ENCODE measurements at regions of chr20 and their contacts with region 1.

Region 1: GRCh38 chr20:34907616-34908469 is 31.4 kb downstream of the ACSS2 start:
- DNase-seq: peak in 1 of 2 donors; percentile 79
- H3K4me3 ChIP-seq: no peak overlapping the region
- H3K27ac ChIP-seq: peak overlapping the region; percentile 77 to 82
- H3K4me1 ChIP-seq: peaks cover 6 to 28% of the 10 kb centered on the region in 2 donors
- H3K27me3 ChIP-seq: no peaks in the 10 kb centered on the region
- CTCF ChIP-seq: no peak

Region 2: DNA sequence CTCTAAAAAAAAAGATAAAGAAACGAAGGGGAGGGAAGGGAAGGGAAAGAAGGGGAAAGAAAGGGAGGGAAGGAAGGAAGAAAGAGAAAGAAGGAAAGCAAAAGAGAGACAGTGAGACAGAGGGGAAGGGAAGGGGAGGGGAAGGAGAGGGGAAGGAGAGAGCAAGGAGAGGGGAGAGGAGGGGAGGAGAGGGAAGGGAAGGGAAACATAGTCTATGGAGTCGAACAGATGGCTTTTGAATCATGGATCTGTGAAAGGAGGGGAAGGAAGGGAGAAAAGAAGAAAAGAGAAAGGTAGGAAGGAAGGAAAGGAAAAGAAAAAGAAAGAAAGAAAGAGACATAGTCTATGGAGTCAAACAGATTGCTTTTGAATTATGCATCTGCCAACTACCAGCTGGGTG is 65.7 kb before region 1 on chr20:
- intact Hi-C with region 1: no loop called
- DNase-seq: no peak
- H3K4me3 ChIP-seq: no peak overlapping the region
- H3K27ac ChIP-seq: no peak overlapping the region
- H3K4me1 ChIP-seq: no peaks in the 10 kb centered on the region
- H3K27me3 ChIP-seq: no peaks in the 10 kb centered on the region
- CTCF ChIP-seq: no peak

Region 3: GRCh38 chr20:34883087-34883688 is 24.7 kb before region 1 on chr20:
- intact Hi-C with region 1: loop called (anchors 2 kb)
- DNase-seq: no peak
- H3K4me3 ChIP-seq: no peak overlapping the region
- H3K27ac ChIP-seq: peak overlapping the region; percentile 8 to 35
- H3K4me1 ChIP-seq: peaks cover 3 to 22% of the 10 kb centered on the region in 2 donors
- H3K27me3 ChIP-seq: no peaks in the 10 kb centered on the region
- CTCF ChIP-seq: no peak